ENCODE measurements at regions of chr17 and their contacts with region 1.

Region 1: GRCh38 chr17:6069539-6070429 is at the start of gene WSCD1:
- DNase-seq: peak; percentile 21
- H3K4me3 Mint-ChIP-seq: peak within 1 kb of the TSS; percentile 53
- H3K27ac Mint-ChIP-seq: no peak within 1 kb of the TSS
- H3K4me1 Mint-ChIP-seq: peaks cover 14% of the 10 kb centered on the region
- H3K27me3 Mint-ChIP-seq: peaks cover 82% of the 10 kb centered on the region
- CTCF ChIP-seq: no peak
- total RNA-seq, gene WSCD1: 0.45 and 1.8 TPM in 2 replicates

Region 2: DNA sequence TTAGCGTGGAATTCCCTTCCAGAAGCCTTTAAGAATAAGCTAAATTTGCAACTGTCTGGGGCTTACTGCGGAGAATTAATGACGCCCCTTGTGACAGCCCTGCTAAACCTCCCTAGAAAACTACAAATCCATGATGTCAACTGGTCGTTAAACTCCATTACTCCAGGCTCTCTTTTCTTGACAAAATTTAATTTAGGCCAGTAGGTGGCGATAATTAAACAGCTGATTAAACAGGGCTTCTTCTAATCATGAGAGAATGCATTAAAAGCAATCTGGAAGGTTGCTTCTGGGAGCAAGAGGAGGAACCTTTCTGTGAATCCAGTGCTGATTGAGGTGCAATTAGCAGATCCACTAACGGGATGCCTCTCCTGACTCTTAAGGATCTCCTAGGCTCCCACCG is 477.4 kb before region 1 on chr17:
- CTCF ChIA-PET with region 1: no interaction called
- intact Hi-C with region 1: loop called (anchors 10 kb)
- DNase-seq: no peak
- H3K4me3 Mint-ChIP-seq: no peak overlapping the region
- H3K27ac Mint-ChIP-seq: no peak overlapping the region
- H3K4me1 Mint-ChIP-seq: peaks cover 3% of the 10 kb centered on the region
- H3K27me3 Mint-ChIP-seq: peaks cover 68% of the 10 kb centered on the region
- CTCF ChIP-seq: no peak

Region 3: DNA sequence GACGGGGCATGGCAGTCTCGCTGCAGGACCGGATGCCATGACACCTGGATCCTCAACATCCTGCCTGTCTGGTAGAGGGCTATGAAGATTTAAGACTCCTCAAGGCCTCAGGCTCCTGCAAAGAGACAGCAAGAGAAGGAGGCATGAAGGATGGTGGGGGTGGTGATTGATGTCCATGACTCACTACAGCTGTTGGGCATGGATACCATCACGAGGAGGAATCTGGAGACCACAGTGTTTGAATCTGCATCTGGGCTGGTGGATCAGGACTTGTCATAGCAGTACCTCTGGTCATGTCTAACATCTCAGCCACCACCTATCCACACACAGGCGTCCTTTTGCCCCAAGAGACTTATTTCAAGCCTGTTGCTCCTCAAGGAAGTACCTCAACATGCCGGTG is 49.8 kb before region 1 on chr17:
- CTCF ChIA-PET with region 1: no interaction called
- intact Hi-C with region 1: no loop called
- DNase-seq: no peak
- H3K4me3 Mint-ChIP-seq: no peak overlapping the region
- H3K27ac Mint-ChIP-seq: no peak overlapping the region
- H3K4me1 Mint-ChIP-seq: no peaks in the 10 kb centered on the region
- H3K27me3 Mint-ChIP-seq: peaks cover 64% of the 10 kb centered on the region
- CTCF ChIP-seq: no peak